Activated CD8-positive, alpha-beta T cell treated with anti-CD3 and anti-CD28 coated beads for 36 hours (primary cell): ENCODE measurements at regions of chr1 and their contacts with region 1.

Region 1: GRCh38 chr1:171256940-171257606 is 8.8 kb downstream of the FMO1 start:
- DNase-seq: no peak
- ATAC-seq: no peak
- H3K4me3 Mint-ChIP-seq: no peak overlapping the region
- H3K27ac Mint-ChIP-seq: no peak overlapping the region
- H3K4me1 Mint-ChIP-seq: peaks cover 2% of the 10 kb centered on the region
- H3K27me3 Mint-ChIP-seq: peaks cover 22% of the 10 kb centered on the region
- CTCF ChIP-seq: no peak

Region 2: DNA sequence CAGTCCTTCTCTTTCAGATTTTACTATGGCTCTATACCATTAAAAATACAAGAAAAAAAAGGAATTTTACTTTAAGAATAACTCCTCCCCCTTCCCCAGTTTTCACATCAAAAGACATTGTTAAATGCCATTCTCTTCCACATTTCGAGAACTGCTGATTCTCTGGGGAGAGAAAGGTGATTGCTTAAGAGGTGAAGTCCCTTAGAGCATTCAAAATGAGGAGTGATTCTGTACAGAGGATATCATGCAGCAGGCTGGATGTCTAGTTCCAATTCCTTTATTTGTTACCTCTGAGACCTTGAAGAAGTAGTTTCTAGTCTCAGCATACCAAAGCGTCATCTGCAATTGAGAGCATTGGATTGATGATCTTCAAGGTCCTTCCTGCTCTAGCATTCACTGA is 119.5 kb before region 1 on chr1:
- CTCF ChIA-PET with region 1: no interaction called
- POLR2A ChIA-PET with region 1: no interaction called
- intact Hi-C with region 1: no loop called
- DNase-seq: no peak
- ATAC-seq: no peak
- H3K4me3 Mint-ChIP-seq: no peak overlapping the region
- H3K27ac Mint-ChIP-seq: no peak overlapping the region
- H3K4me1 Mint-ChIP-seq: no peaks in the 10 kb centered on the region
- H3K27me3 Mint-ChIP-seq: peaks cover 8% of the 10 kb centered on the region
- CTCF ChIP-seq: no peak

Region 3: GRCh38 chr1:171245458-171246064 is 11.5 kb before region 1 on chr1:
- CTCF ChIA-PET with region 1: interaction called, 19 read pairs
- POLR2A ChIA-PET with region 1: no interaction called
- intact Hi-C with region 1: no loop called
- DNase-seq: peak; percentile 17
- ATAC-seq: no peak
- H3K4me3 Mint-ChIP-seq: no peak overlapping the region
- H3K27ac Mint-ChIP-seq: no peak overlapping the region
- H3K4me1 Mint-ChIP-seq: no peaks in the 10 kb centered on the region
- H3K27me3 Mint-ChIP-seq: peaks cover 33% of the 10 kb centered on the region
- CTCF ChIP-seq: peak; percentile 61

Region 4: DNA sequence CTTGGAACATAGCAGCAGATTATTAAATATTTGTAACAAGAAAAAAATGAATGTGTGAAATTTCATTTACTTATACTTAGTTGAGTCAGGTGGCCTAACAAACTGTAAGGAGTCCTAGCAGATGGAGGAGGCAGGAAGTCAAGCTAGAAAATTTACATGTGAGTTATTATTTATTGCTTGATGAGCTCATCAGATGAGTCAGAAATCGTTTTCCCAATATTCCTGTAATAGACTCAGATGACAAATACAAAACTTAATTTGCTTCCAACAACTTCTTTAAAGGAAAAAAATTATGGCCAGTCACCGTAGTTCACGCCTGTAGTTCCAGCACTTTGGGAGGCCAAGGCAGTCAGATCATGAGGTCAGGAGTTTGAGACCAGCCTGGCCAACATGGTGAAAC is 184.2 kb after region 1 on chr1:
- CTCF ChIA-PET with region 1: no interaction called
- POLR2A ChIA-PET with region 1: no interaction called
- intact Hi-C with region 1: no loop called
- DNase-seq: no peak
- ATAC-seq: no peak
- H3K4me3 Mint-ChIP-seq: no peak overlapping the region
- H3K27ac Mint-ChIP-seq: no peak overlapping the region
- H3K4me1 Mint-ChIP-seq: no peaks in the 10 kb centered on the region
- H3K27me3 Mint-ChIP-seq: no peaks in the 10 kb centered on the region
- CTCF ChIP-seq: no peak